ENCODE measurements at regions of chr2 and their contacts with region 1.

Region 1: GRCh38 chr2:119641562-119642258 is 37.3 kb upstream of the TMEM177 start:
- DNase-seq: peak; percentile 84
- H3K4me3 Mint-ChIP-seq: no peak overlapping the region
- H3K27ac Mint-ChIP-seq: no peak overlapping the region
- H3K4me1 Mint-ChIP-seq: no peaks in the 10 kb centered on the region
- H3K27me3 Mint-ChIP-seq: peaks cover 3% of the 10 kb centered on the region

Region 2: GRCh38 chr2:119659601-119660342 is 18.1 kb after region 1 on chr2:
- CTCF ChIA-PET with region 1: interaction called, 67 read pairs
- POLR2A ChIA-PET with region 1: no interaction called
- intact Hi-C with region 1: loop called (anchors 1 kb)
- DNase-seq: peak; percentile 50
- H3K4me3 Mint-ChIP-seq: no peak overlapping the region
- H3K27ac Mint-ChIP-seq: no peak overlapping the region
- H3K4me1 Mint-ChIP-seq: peaks cover 2% of the 10 kb centered on the region
- H3K27me3 Mint-ChIP-seq: peaks cover 7% of the 10 kb centered on the region

Region 3: GRCh38 chr2:119678998-119679710 is 37.4 kb after region 1 on chr2 and contains the start of gene TMEM177:
- CTCF ChIA-PET with region 1: interaction called, 11 read pairs
- POLR2A ChIA-PET with region 1: interaction called, 6 read pairs
- intact Hi-C with region 1: no loop called
- DNase-seq: peak; percentile 93
- H3K4me3 Mint-ChIP-seq: peak within 1 kb of the TSS; percentile 86
- H3K27ac Mint-ChIP-seq: peak within 1 kb of the TSS; percentile 77
- H3K4me1 Mint-ChIP-seq: peaks cover 34% of the 10 kb centered on the region
- H3K27me3 Mint-ChIP-seq: no peaks in the 10 kb centered on the region
- total RNA-seq, gene TMEM177: 13.5 to 14.9 TPM

Region 4: DNA sequence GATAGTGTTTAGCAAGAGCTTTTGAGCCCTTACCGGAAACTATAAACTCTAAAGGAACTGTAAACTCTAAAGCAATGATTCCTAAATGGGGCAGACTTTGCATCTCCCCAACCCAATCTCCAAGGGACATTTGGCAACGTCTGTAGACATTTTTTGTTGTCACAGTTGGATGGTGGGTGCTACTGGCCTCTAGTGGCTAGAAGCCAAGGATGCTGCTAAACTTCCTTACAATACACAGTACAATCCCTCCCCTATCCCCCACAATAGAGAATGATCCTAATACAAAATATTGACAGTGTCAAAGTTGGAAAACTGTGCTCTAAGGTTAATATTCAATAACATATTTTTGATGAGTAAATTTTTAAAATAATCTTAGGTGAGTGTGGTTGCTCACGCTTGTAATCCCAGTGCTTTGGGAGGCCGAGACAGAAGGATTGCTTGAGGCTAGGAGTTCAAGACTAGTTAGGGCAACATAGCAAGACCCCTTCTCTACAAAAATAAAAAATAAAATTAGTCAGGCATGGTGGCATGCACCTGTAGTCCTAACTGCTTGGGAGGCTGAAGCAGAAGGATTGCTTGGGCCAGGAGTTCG is 184.8 kb after region 1 on chr2:
- CTCF ChIA-PET with region 1: no interaction called
- POLR2A ChIA-PET with region 1: no interaction called
- intact Hi-C with region 1: loop called (anchors 2 kb)
- DNase-seq: peak; percentile 57
- H3K4me3 Mint-ChIP-seq: no peak overlapping the region
- H3K27ac Mint-ChIP-seq: no peak overlapping the region
- H3K4me1 Mint-ChIP-seq: peaks cover 42% of the 10 kb centered on the region
- H3K27me3 Mint-ChIP-seq: no peaks in the 10 kb centered on the region